ENCODE measurements at regions of chr2 and their contacts with region 1.

Region 1: GRCh38 chr2:200864176-200864976 is at the start of gene CLK1:
- DNase-seq: peak; percentile 95
- ATAC-seq: peak; percentile 79
- H3K4me3 Mint-ChIP-seq: peak within 1 kb of the TSS; percentile 96
- H3K27ac Mint-ChIP-seq: peak within 1 kb of the TSS; percentile 98
- H3K4me1 Mint-ChIP-seq: peaks cover 27% of the 10 kb centered on the region
- H3K27me3 Mint-ChIP-seq: no peaks in the 10 kb centered on the region
- total RNA-seq, gene CLK1: 204 to 228 TPM

Region 2: DNA sequence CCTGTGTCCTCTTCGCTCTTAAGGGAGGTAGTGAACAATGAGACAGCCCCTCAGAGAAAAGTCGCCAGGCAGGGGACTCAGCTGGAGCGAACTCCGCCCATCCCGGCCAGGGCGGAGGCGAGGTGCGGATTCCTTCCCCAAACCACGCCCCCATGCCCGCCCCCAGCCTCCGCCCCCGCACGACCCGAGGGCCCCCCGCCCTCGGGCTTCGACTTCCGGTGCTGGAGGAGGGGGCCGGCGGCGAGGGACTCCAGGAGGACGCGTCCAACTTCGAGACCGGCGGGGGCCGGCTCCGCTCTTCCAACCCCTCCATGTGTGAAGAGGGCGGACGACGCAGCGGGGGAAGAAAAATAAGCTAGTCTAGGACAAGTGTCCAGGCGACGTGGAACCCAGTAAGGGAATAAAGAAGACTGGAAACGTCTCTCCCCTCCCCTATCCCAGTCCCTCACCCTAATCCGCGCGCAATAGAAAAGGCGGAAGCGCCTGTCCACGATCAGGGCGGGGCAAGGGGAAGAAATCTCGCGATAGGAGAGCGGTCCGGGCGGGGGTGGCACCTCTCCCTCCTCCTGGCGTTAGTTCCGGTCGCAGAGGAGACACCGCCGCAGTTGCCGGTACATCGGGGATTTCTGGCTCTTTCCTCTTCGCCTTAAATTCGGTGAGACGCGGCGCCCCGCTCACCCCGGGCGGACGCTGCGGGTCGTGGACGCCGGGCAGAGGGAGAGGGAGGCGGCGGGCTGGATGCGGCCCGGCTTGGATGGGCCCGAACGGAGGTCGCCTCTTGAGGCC is 52.8 kb before region 1 on chr2 and contains the start of gene BZW1:
- POLR2A ChIA-PET with region 1: interaction called, 24 read pairs
- DNase-seq: peak; percentile 95
- ATAC-seq: peak; percentile 81
- H3K4me3 Mint-ChIP-seq: peak within 1 kb of the TSS; percentile 95
- H3K27ac Mint-ChIP-seq: peak within 1 kb of the TSS; percentile 96
- H3K4me1 Mint-ChIP-seq: peaks cover 36% of the 10 kb centered on the region
- H3K27me3 Mint-ChIP-seq: no peaks in the 10 kb centered on the region
- total RNA-seq, gene BZW1: 197 to 199 TPM

Region 3: GRCh38 chr2:200877443-200877842 is 13.1 kb after region 1 on chr2:
- POLR2A ChIA-PET with region 1: interaction called, 12 read pairs
- DNase-seq: no peak
- ATAC-seq: no peak
- H3K4me3 Mint-ChIP-seq: no peak overlapping the region
- H3K27ac Mint-ChIP-seq: no peak overlapping the region
- H3K4me1 Mint-ChIP-seq: peaks cover 8% of the 10 kb centered on the region
- H3K27me3 Mint-ChIP-seq: no peaks in the 10 kb centered on the region

Region 4: DNA sequence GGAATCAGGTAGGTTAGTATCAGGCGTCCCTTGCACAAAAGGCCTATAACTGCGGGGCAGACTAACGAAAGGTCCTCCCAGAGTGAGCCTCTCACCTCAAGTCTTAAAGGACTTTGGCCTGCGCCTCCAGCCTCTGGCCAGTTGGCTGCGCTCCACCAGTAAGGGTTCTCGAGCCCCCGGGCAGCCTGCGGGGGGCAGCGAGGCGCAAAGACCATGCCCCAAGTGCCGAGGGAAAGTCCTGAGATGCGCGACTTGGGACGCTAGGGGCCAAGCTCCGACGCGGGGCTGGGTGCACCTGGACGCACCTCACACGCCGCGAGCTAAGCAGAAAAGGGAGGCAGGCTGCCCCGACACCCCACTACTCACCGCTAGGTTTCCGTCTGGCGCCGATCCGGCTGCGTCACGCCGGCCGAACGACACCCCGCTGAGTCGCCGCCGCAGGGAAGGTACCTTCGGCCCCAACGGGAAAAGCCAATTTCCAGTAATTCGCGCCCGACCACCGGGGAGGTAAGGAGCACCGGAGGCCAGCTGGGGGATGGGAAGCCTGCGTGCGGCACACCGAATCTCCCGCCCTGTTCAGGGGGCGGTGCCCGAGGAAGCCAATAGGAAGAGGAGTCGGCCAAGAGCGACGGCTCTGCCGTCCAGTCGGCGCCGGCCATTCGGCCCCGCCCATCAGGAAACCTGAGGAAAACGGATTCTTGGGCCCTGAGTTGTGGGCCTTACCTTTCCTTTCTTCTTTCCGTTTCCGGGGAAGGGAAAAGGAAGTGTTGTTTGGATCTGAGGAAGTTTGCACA is 98.9 kb after region 1 on chr2 and contains the start of gene ORC2:
- POLR2A ChIA-PET with region 1: interaction called, 15 read pairs
- DNase-seq: peak; percentile 96
- ATAC-seq: peak; percentile 93
- H3K4me3 Mint-ChIP-seq: peak within 1 kb of the TSS; percentile 96
- H3K27ac Mint-ChIP-seq: peak within 1 kb of the TSS; percentile 97
- H3K4me1 Mint-ChIP-seq: peaks cover 43% of the 10 kb centered on the region
- H3K27me3 Mint-ChIP-seq: no peaks in the 10 kb centered on the region
- total RNA-seq, gene ORC2: 52.0 to 55.0 TPM

Measured in activated naive CD8-positive, alpha-beta T cell treated with anti-CD3 and anti-CD28 coated beads, Interleukin-2, amount 10 ng/mL, durations not matched to agents 7 days and 5 days (primary cell).